ENCODE measurements at regions of chr11 and their contacts with region 1.

Region 1: GRCh38 chr11:76919887-76920746 is 59.4 kb downstream of the ACER3 start:
- DNase-seq: peak; percentile 64
- CTCF ChIP-seq: peak; percentile 79

Region 2: GRCh38 chr11:76807206-76807875 is 112.8 kb before region 1 on chr11:
- CTCF ChIA-PET with region 1: interaction called, 86 read pairs
- POLR2A ChIA-PET with region 1: no interaction called
- DNase-seq: peak; percentile 79
- CTCF ChIP-seq: peak; percentile 72

Region 3: DNA sequence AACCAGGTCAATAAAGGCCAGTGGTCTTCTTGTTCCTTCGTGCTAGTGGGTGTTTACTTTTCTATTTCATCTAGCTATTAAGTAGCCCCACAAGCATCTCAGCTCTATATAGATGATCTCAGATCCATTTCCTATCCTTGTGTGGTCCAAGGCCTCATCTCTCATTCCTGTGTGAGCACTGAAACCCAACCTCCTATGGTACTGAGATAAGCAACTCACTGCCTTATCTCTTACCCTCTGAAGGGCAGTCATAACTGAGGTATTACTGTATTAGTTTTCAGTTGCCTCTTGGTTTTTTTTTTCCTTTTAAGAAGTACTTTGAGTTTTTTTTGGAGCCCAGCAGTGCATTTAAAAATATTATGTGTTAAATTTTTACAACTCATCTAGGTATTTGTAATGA is 31.1 kb before region 1 on chr11:
- CTCF ChIA-PET with region 1: interaction called, 42 read pairs
- POLR2A ChIA-PET with region 1: no interaction called
- DNase-seq: no peak
- CTCF ChIP-seq: no peak

Region 4: DNA sequence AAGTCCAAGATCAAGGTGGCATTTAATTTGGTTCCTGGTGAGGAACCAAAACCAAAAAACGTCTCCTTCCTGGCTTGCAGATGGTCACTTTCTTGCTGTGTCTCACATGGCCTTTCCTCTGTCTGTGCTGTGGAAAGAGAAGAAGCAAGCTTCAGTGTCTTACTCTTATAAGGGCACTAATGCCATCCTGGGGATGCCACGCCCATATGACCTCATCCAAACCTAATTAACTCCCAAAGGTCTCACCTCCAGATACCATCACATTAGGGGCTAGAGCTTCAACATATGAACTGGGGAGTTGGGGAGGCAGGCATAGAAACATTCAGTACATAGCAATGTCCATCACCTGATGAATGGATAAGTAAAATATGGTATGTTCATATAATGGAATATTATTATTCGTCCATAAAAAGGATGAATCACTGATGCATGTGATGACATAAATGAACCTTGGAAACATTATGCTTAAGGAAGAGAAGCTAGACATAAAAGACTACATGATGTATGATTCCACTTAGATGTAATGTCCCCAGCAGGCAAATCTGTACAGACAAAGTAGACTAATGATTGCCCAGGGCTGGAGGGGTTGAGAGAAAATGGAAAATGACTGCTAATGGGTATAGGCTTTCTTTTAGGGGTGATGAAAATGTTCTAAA is 35.5 kb after region 1 on chr11:
- CTCF ChIA-PET with region 1: interaction called, 11 read pairs
- POLR2A ChIA-PET with region 1: no interaction called
- DNase-seq: no peak
- CTCF ChIP-seq: no peak

Region 5: GRCh38 chr11:77066229-77067042 is 146.3 kb after region 1 on chr11 and contains the start of gene CAPN5:
- CTCF ChIA-PET with region 1: interaction called, 10 read pairs
- POLR2A ChIA-PET with region 1: no interaction called
- DNase-seq: peak; percentile 97
- CTCF ChIP-seq: peak; percentile 3